ENCODE measurements at regions of chr1 and their contacts with region 1.

Region 1: GRCh38 chr1:227734856-227735538 is at the starts of genes JMJD4 and SNAP47:
- DNase-seq: peak; percentile 95
- ATAC-seq: peak; percentile 91
- H3K4me3 ChIP-seq: peak within 1 kb of the TSS; percentile 58 to 96 (median 83)
- H3K4me3 Mint-ChIP-seq: peak within 1 kb of the TSS; percentile 91
- H3K27ac ChIP-seq: peak within 1 kb of the TSS; percentile 55 to 90
- H3K27ac Mint-ChIP-seq: peak within 1 kb of the TSS; percentile 87
- H3K4me1 ChIP-seq: peaks cover 12 to 23% of the 10 kb centered on the region in 2 donors
- H3K4me1 Mint-ChIP-seq: peaks cover 36% of the 10 kb centered on the region
- H3K27me3 ChIP-seq: no peaks in the 10 kb centered on the region
- H3K27me3 Mint-ChIP-seq: no peaks in the 10 kb centered on the region
- CTCF ChIP-seq: no peak
- total RNA-seq, gene JMJD4: 30.6 and 30.7 TPM in 2 replicates
- total RNA-seq, gene SNAP47: 34.3 and 34.9 TPM in 2 replicates

Region 2: DNA sequence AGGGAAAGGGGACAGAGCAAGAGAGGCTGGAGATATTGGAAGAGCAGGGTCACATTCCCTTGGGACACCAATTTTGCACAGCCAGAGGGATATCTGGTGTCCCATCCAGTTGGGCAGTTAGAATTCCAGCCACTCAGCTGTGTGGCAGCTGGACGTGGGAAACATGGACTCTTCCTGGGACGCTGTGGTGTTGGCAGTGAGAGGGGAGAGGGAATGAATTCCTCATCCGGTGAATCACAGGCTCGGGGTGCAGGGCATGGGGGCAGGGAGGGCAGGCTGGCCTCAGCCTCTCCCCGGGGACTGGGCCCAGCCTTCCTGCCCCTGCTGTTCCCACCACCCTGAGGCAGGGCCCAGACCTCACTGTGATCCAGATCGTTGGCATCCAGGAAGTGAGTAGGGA is 280.3 kb after region 1 on chr1:
- CTCF ChIA-PET with region 1: no interaction called
- POLR2A ChIA-PET with region 1: no interaction called
- intact Hi-C with region 1: no loop called
- DNase-seq: no peak
- ATAC-seq: no peak
- H3K4me3 ChIP-seq: no peak overlapping the region
- H3K4me3 Mint-ChIP-seq: no peak overlapping the region
- H3K27ac ChIP-seq: no peak overlapping the region
- H3K27ac Mint-ChIP-seq: no peak overlapping the region
- H3K4me1 ChIP-seq: peaks cover 3 to 4% of the 10 kb centered on the region in 2 donors
- H3K4me1 Mint-ChIP-seq: peaks cover 11% of the 10 kb centered on the region
- H3K27me3 ChIP-seq: peaks cover 0 to 4% (median 0%) of the 10 kb centered on the region in 4 experiments
- H3K27me3 Mint-ChIP-seq: peaks cover 13% of the 10 kb centered on the region
- CTCF ChIP-seq: no peak

Region 3: DNA sequence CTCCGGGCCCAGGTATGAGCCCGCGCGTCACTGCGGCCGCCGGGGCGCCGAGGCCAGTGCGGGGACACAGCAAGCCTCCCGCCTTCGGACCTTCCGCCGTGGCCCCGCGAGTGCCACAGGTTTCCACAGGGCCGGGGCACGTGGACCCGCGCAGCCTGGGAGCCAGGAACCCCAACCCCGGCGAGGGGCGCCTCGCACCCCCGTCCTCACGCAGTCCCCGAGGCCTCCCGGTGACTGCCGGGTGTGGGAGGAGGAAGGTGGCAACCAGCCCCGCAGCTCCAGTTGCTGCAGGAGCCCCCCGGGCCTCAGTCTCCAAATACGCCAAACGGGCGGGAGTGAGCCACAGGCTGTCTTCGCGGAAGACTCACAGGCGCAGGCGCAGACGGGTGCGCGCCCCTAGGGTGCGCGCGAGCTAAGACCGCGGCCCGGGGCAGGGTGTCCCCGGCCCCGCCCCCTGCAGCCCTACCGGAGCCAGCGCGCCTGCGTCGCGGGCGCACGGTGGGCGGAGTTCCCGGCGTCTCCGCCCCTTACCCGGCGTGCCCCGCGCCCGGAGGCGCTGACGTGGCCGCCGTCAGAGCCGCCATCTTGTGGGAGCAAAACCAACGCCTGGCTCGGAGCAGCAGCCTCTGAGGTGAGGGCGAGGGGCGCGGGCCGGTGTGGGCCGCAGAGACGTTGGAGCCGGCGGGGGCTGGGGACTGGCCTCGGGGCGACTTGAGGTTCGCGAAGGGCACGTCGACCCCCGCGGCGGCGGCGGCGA is 347.3 kb after region 1 on chr1 and contains the start of gene ARF1:
- CTCF ChIA-PET with region 1: no interaction called
- POLR2A ChIA-PET with region 1: no interaction called
- intact Hi-C with region 1: loop called (anchors 1 kb)
- DNase-seq: peak; percentile 96
- ATAC-seq: peak; percentile 92
- H3K4me3 ChIP-seq: peak within 1 kb of the TSS; percentile 78 to 97 (median 91)
- H3K4me3 Mint-ChIP-seq: peak within 1 kb of the TSS; percentile 94
- H3K27ac ChIP-seq: peak within 1 kb of the TSS; percentile 78 to 96
- H3K27ac Mint-ChIP-seq: peak within 1 kb of the TSS; percentile 93
- H3K4me1 ChIP-seq: peaks cover 44 to 50% of the 10 kb centered on the region in 2 donors
- H3K4me1 Mint-ChIP-seq: peaks cover 46% of the 10 kb centered on the region
- H3K27me3 ChIP-seq: no peaks in the 10 kb centered on the region
- H3K27me3 Mint-ChIP-seq: no peaks in the 10 kb centered on the region
- CTCF ChIP-seq: no peak
- total RNA-seq, gene ARF1: 193 and 195 TPM in 2 replicates